Left cardiac atrium (tissue), 4 donors: ENCODE measurements at regions of chr5 and their contacts with region 1.

Region 1: GRCh38 chr5:137320056-137321045 is 178.8 kb downstream of the SPOCK1 start:
- DNase-seq: no peak
- ATAC-seq: peak; percentile 17 to 31

Region 2: GRCh38 chr5:136269973-136270372 is 1050.4 kb before region 1 on chr5:
- intact Hi-C with region 1: no loop called
- DNase-seq: no peak
- ATAC-seq: no peak

Region 3: DNA sequence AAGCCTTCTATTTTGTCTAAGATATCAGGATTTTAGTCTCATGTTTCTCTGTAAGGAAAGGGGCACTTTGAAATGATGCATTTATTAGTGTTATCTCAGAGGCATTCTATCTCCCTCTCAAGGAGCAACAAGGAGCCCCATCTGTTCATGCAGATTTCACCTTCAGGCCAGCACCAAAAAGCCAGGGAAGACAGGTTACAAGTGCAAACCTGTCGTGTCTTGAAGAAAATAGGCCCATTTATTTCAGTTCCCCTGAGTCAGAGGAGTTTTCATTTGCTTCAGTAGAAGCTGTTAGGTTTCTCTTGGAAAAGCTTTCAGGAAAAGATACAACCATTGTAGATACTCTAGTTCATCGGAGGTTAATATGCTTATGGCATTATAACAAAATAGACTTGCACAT is 81.6 kb after region 1 on chr5:
- intact Hi-C with region 1: no loop called
- DNase-seq: no peak
- ATAC-seq: no peak

Region 4: DNA sequence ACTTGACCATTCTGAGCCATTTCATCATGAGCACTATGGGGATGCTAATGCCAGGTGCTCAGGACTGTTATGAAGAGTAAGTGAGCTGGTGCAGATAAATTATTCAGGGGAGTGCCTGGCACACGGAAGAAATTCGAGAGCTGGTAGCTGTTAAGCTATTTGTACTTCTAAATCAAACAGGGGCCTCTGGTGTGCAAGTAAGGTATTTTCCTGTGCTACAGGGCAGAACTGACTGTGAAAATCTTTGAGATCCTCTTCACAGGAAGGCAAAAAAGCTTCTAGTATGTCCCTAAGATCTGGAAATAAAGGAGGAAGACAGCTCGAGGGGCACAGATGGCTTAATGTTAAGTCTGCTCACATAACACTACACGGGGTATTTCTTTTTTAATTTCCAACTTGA is 285.1 kb after region 1 on chr5:
- intact Hi-C with region 1: loop called in 1 of 2 experiments (anchors 10 kb)
- DNase-seq: no peak
- ATAC-seq: peak in 1 of 2 donors; percentile 68